ENCODE measurements at regions of chr12 and their contacts with region 1.

Region 1: DNA sequence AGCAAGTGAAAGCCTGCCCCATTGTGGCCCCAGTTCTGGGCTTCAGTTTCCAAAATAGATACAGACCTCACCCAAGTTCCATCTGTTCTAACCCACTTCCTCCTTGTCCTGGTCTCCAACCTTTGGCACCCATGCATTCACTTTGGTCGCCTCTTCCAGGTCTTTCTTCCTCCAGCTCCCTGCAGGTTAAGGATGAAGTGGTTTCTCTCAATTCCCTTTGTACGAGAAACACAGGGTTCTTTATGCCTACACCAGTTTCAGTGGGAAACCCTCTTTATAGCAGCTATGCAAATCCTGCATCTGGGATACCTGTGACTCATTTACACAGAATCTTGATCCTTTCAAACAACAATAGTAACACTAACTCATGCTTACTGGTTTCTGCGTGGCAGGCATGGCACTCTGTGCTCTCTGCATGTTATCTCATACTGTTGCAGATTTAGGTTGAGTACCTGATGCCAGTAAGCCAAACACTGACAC is 110.6 kb upstream of the AMIGO2 start:
- DNase-seq: peak; percentile 42
- H3K4me3 Mint-ChIP-seq: peak overlapping the region; percentile 4
- H3K27ac Mint-ChIP-seq: peak overlapping the region; percentile 99
- H3K4me1 Mint-ChIP-seq: peaks cover 79% of the 10 kb centered on the region
- H3K27me3 Mint-ChIP-seq: no peaks in the 10 kb centered on the region
- CTCF ChIP-seq: no peak

Region 2: DNA sequence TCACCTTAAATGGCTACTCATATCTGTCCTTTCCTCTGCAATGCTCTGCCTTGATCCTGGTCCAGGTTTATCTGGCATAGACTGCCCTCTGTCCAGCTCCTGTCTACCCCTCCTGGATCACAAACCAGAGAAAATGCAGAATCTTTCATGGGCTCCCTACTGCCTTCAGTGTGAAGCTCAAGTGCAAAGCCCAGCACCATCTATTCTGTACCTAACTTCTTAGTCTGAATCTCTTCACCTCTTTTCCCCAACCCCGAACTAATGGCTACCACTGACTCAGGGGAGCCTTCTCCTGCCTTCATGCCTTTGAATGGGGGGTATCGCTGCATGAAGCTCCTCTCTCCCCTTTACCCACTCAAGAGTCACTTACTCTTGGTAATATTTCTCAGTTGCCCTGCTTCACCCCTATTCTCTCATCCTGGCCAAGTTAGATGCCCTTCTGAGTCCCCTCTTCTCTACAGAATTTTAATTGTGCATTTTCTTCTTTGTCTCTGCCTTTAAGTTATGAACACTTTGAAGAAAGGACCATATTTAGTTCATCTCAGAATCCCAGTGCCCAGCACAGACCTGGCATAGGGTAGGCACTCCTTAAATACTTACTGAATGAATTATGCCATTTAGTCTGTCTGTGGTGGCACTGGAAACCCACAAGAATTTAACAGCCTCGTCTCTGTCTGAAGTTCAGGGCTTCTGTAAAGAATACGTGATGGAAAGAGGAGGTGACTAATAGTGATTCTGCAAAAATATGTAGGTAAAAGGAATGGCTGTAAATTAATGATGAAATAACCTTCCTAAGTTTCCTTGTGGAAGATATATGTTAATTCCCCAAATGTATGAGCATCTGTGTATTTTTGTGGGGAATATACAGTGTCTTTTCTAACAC is 80.7 kb after region 1 on chr12:
- CTCF ChIA-PET with region 1: no interaction called
- intact Hi-C with region 1: loop called (anchors 2 kb)
- DNase-seq: peak; percentile 53
- H3K4me3 Mint-ChIP-seq: peak overlapping the region; percentile 47
- H3K27ac Mint-ChIP-seq: peak overlapping the region; percentile 100
- H3K4me1 Mint-ChIP-seq: peaks cover 60% of the 10 kb centered on the region
- H3K27me3 Mint-ChIP-seq: no peaks in the 10 kb centered on the region
- CTCF ChIP-seq: no peak

Measured in Calu3 (cell line).